ENCODE measurements at regions of chr14 and their contacts with region 1.

Region 1: GRCh38 chr14:37816135-37816534 is 220.7 kb downstream of the TTC6 start:
- DNase-seq: no peak
- ATAC-seq: no peak
- H3K4me3 ChIP-seq: no peak overlapping the region
- H3K4me3 Mint-ChIP-seq: no peak overlapping the region
- H3K27ac ChIP-seq: no peak overlapping the region
- H3K27ac Mint-ChIP-seq: no peak overlapping the region
- H3K4me1 ChIP-seq: no peaks in the 10 kb centered on the region
- H3K4me1 Mint-ChIP-seq: no peaks in the 10 kb centered on the region
- H3K27me3 ChIP-seq: no peaks in the 10 kb centered on the region
- H3K27me3 Mint-ChIP-seq: peaks cover 0 to 12% of the 10 kb centered on the region in 2 donors

Region 2: DNA sequence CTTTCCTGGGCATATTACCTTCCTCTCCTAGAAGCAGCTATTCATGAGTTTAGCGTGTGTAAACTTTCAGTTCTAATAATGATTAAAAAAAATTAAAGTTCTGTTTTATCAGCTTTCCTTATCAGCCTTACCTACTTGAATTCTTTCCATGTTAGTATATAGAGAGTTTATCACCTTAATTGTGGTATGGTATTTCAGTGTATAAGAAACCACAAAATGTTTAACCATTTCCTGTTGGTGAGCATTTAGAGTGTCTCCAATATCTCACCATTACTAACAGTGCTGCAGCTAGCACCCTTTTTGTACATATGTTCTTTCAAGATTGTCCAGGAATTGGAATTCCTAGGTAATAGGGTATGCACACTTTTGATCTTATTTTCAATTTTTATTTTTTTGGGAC is 1526.6 kb after region 1 on chr14:
- CTCF ChIA-PET with region 1: interaction called in 1 of 2 experiments, 11 read pairs
- POLR2A ChIA-PET with region 1: no interaction called
- DNase-seq: peak in 1 of 35 experiments; percentile 3
- ATAC-seq: no peak
- H3K4me3 ChIP-seq: no peak overlapping the region
- H3K4me3 Mint-ChIP-seq: no peak overlapping the region
- H3K27ac ChIP-seq: no peak overlapping the region
- H3K27ac Mint-ChIP-seq: no peak overlapping the region
- H3K4me1 ChIP-seq: no peaks in the 10 kb centered on the region
- H3K4me1 Mint-ChIP-seq: peaks cover 14 to 22% (median 18%) of the 10 kb centered on the region in 3 donors
- H3K27me3 ChIP-seq: no peaks in the 10 kb centered on the region
- H3K27me3 Mint-ChIP-seq: no peaks in the 10 kb centered on the region

Measured in T-cell (primary cell).